ENCODE measurements at regions of chr1 and their contacts with region 1.

Region 1: DNA sequence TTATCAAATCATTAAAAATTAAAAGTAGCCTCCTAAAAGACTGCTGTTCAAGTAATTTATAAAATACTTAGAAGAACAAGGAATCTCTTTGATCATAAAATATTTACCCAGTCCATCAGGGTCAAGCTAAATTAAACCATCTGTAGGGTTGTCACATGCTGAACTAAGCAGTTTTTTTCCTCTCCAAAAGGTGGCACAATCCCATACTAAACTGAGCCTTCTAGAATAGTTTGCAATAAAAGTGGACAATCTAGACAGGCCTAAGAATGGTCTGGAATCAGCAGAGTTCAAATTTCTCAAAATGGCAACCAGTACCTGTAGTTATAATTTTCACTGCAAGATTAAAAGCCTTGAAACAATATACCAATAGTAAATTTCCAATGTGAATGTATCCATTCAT is 194.8 kb downstream of the EIF4G3 start:
- DNase-seq: no peak
- H3K4me3 ChIP-seq: no peak overlapping the region
- H3K27ac ChIP-seq: no peak overlapping the region
- H3K4me1 ChIP-seq: peaks cover 0 to 9% of the 10 kb centered on the region in 2 donors
- H3K27me3 ChIP-seq: no peaks in the 10 kb centered on the region
- CTCF ChIP-seq: peak in 5 of 6 experiments; percentile 23 to 50 (median 36)
- POLR2A ChIP-seq: no peak

Region 2: DNA sequence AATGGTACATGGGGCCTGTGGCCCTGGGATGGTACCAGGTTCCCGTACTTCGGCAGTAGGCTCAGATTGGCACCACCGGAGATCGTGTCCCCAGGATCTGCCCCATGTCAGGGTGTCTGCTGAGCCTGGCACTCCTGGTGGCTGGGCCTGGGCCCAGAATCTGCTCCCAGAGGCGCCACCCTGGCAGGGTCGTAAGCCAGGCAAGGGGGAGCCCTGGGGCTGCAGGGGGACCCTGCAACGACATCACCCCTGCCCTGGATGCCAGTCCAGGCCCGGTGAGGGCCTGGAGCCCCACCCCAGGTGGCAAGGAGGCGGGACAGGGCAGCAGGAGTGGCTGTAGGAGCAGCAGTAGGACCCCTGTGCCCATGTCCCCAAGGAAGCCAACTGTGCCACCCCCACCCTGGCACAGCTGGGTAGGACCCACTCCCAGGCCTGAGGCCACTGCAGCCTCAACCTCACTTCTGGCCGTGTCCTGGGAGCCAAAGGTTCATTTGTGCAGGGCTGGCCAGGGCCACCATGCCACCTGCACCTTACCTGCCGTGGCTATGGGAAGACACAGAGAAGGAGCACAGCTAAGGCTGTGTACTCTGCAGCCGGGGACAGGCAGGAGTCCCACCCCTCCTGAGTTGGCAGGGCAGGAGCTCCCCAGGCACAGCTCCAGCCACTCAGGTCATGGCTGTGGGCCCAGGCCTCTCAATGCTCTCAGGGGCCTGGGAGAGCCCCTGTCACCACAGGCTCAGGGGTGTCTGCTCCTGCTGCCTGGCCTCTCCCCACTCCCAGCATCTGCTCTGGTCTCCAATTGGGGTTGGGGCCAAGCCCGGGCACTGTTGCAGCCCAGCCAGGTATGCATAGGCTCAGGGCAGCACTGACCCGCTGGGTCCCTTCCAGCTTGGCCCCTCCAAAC is 53.1 kb after region 1 on chr1:
- intact Hi-C with region 1: no loop called
- DNase-seq: peak in 1 of 7 donors; percentile 19
- H3K4me3 ChIP-seq: no peak overlapping the region
- H3K27ac ChIP-seq: no peak overlapping the region
- H3K4me1 ChIP-seq: peaks cover 0 to 20% of the 10 kb centered on the region in 2 donors
- H3K27me3 ChIP-seq: no peaks in the 10 kb centered on the region
- CTCF ChIP-seq: no peak
- POLR2A ChIP-seq: no peak

Region 3: DNA sequence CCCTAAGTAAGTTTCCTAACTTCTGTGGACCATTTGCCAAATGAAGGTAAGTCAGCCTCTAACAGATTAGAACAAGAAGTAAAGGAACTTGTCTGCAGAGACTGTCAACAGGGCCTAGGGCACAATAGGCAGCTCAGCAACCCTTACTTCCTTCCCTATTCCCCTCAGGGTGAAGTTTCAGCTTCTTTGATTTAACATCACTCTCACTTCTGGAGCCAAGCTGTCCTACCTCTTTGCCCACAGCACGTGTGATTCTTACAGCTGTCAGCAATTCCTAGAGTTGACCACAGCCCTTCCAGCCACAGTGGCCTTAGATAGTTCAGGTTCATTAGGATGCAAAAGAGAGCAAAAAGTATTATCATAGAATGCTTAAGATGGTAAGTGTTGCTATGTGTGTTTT is 202.4 kb after region 1 on chr1:
- intact Hi-C with region 1: loop called in 1 of 2 experiments (anchors 10 kb)
- DNase-seq: peak in 1 of 7 donors; percentile 4
- H3K4me3 ChIP-seq: no peak overlapping the region
- H3K27ac ChIP-seq: no peak overlapping the region
- H3K4me1 ChIP-seq: no peaks in the 10 kb centered on the region
- H3K27me3 ChIP-seq: no peaks in the 10 kb centered on the region
- CTCF ChIP-seq: no peak
- POLR2A ChIP-seq: no peak

Measured in adrenal gland (tissue), 19 donors.